ENCODE measurements at regions of chr15 and their contacts with region 1.

Region 1: GRCh38 chr15:41544650-41545015 is 576 bp upstream of the RPAP1 start:
- DNase-seq: no peak
- ATAC-seq: no peak
- H3K4me3 ChIP-seq: peak overlapping the region; percentile 100
- H3K27ac ChIP-seq: no peak overlapping the region
- H3K4me1 ChIP-seq: peaks cover 5 to 11% of the 10 kb centered on the region in 2 experiments; a peak in 3 of 5 replicates
- H3K27me3 ChIP-seq: no peaks in the 10 kb centered on the region
- CTCF ChIP-seq: no peak
- EP300 ChIP-seq: no peak
- POLR2A ChIP-seq: no peak
- RAD21 ChIP-seq: no peak

Region 2: DNA sequence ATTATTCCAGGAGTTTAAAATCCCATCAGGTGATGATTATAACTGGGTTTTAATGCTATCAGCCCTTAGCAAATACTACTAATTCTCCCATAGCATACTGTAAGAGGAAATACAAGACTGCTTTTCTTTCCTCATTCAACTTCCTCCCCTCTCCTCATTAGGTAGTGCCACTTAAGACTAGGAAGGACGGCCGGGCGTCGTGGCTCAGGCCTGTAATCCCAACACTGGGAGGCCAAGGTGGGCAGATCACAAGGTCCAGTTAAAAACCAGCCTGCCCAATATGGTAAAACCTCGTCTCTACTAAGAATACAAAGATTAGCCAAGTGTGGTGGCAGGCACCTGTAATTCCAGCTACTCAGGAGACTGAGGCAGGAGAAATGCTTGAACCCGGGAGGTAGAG is 157.0 kb before region 1 on chr15:
- CTCF ChIA-PET with region 1: no interaction called
- POLR2A ChIA-PET with region 1: no interaction called
- in situ Hi-C with region 1: no loop called
- intact Hi-C with region 1: no loop called
- DNase-seq: no peak
- ATAC-seq: no peak
- H3K4me3 ChIP-seq: no peak overlapping the region
- H3K27ac ChIP-seq: no peak overlapping the region
- H3K4me1 ChIP-seq: no peaks in the 10 kb centered on the region; a peak in 1 of 5 replicates
- H3K27me3 ChIP-seq: no peaks in the 10 kb centered on the region
- CTCF ChIP-seq: no peak
- EP300 ChIP-seq: no peak
- POLR2A ChIP-seq: no peak
- RAD21 ChIP-seq: no peak

Region 3: DNA sequence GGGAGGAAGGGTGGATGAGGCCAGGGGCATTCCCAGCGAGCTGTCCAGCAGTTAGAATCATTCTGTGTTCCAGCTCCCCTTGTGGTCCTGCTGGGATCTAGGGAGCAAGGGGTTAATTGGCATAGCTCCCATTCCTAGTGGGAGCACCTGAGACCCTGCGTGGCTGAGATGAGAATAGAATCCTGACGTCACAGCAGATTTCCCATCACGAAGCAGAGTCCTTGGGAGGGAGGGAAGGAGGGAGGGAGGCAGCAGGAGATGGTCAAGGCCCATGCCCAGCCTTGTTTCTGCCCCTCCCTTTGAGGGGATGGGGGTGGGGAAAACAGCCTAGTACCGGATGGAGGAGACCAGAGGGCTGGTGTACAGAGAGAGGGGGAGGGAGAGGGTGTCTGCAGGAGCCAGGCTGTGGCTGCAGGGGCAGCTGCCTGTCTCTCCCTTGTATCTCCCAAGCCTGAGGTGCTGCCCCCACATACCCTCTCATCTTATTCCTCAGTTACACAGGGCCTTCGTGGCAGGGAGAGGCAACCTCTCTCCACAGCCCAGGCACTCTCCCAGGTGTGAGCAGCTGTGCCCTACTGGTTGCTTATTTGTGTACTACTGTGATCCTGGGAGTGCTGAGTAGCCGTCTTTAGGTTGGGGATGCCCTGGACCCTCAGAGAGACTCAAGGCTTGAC is 19.8 kb after region 1 on chr15:
- CTCF ChIA-PET with region 1: no interaction called
- POLR2A ChIA-PET with region 1: interaction called, 14 read pairs
- in situ Hi-C with region 1: no loop called
- intact Hi-C with region 1: no loop called
- DNase-seq: peak; percentile 66 to 80 (median 74)
- ATAC-seq: peak; percentile 71
- H3K4me3 ChIP-seq: no peak overlapping the region
- H3K27ac ChIP-seq: peak overlapping the region; percentile 56
- H3K4me1 ChIP-seq: peaks cover 85 to 89% of the 10 kb centered on the region in 2 experiments
- H3K27me3 ChIP-seq: no peaks in the 10 kb centered on the region
- CTCF ChIP-seq: no peak
- EP300 ChIP-seq: no peak
- POLR2A ChIP-seq: no peak; the same call in 1 of the 2 replicates
- RAD21 ChIP-seq: no peak

Region 4: GRCh38 chr15:41655716-41656115 is 111.1 kb after region 1 on chr15:
- CTCF ChIA-PET with region 1: no interaction called
- POLR2A ChIA-PET with region 1: no interaction called
- in situ Hi-C with region 1: no loop called
- intact Hi-C with region 1: no loop called
- DNase-seq: no peak
- ATAC-seq: no peak
- H3K4me3 ChIP-seq: no peak overlapping the region
- H3K27ac ChIP-seq: no peak overlapping the region
- H3K4me1 ChIP-seq: peaks cover 11 to 15% of the 10 kb centered on the region in 2 experiments
- H3K27me3 ChIP-seq: no peaks in the 10 kb centered on the region
- CTCF ChIP-seq: no peak
- EP300 ChIP-seq: no peak
- POLR2A ChIP-seq: no peak
- RAD21 ChIP-seq: no peak

Region 5: GRCh38 chr15:41756198-41756597 is 211.6 kb after region 1 on chr15:
- CTCF ChIA-PET with region 1: no interaction called
- POLR2A ChIA-PET with region 1: no interaction called
- in situ Hi-C with region 1: no loop called
- intact Hi-C with region 1: no loop called
- DNase-seq: no peak
- ATAC-seq: no peak
- H3K4me3 ChIP-seq: no peak overlapping the region
- H3K27ac ChIP-seq: no peak overlapping the region
- H3K4me1 ChIP-seq: no peaks in the 10 kb centered on the region
- H3K27me3 ChIP-seq: no peaks in the 10 kb centered on the region
- CTCF ChIP-seq: no peak
- EP300 ChIP-seq: no peak
- POLR2A ChIP-seq: no peak
- RAD21 ChIP-seq: no peak